Ascending aorta (tissue), 2 donors: ENCODE measurements at regions of chr15 and their contacts with region 1.

Region 1: GRCh38 chr15:85296615-85297402 is 83.6 kb upstream of the AKAP13 start:
- DNase-seq: peak; percentile 13 to 80
- H3K4me3 ChIP-seq: peak overlapping the region; percentile 26 to 39
- H3K27ac ChIP-seq: no peak overlapping the region
- H3K4me1 ChIP-seq: no peaks in the 10 kb centered on the region
- H3K27me3 ChIP-seq: no peaks in the 10 kb centered on the region
- CTCF ChIP-seq: peak; percentile 72 to 77 (median 74)

Region 2: GRCh38 chr15:85367741-85368140 is 70.9 kb after region 1 on chr15:
- intact Hi-C with region 1: no loop called
- DNase-seq: no peak
- H3K4me3 ChIP-seq: no peak overlapping the region
- H3K27ac ChIP-seq: no peak overlapping the region
- H3K4me1 ChIP-seq: no peaks in the 10 kb centered on the region
- H3K27me3 ChIP-seq: no peaks in the 10 kb centered on the region
- CTCF ChIP-seq: no peak

Region 3: DNA sequence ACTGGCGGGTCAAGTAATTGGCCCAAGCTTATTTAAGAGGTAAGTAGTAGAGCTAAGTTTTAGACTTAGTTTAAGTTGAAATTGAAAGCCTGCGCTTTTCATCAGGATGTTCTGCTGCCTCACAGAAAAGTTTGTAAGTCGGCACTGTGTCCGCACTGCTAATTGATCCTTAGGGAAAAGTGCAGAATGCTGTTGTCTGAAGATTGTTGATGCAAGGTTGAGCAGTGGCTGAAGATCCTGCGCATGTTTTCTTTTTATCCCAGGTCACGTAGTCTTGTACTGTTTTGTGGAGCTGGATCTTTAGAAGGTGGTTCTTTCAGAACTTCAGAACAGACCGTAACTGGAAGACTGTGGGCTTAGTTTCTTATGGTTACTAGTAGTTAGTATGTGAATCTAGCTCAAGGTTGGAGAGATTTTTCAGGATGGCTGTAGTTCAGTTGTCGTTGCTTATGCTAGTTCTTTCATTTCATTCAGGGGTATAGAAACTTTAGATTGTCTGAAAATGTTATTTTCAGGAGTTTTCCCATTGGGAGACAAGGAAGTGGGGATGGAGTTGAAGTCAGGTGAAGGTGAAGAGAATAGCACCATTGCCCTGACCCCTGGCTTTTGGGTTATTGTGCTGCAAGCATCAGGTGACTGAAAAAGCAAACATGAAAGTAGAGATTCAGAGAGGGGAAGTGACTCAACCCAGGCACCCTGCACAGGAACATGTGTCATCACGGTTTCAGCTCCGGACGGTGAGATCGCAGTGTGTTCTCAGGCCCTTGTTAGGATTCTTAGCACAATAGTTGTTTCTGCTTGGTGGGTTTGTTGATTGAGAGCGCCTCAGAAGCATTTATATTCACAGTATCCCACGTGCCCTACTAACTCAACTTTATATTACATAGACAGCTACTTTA is 116.4 kb after region 1 on chr15:
- intact Hi-C with region 1: loop called (anchors 5 kb)
- DNase-seq: peak; percentile 59 to 78
- H3K4me3 ChIP-seq: no peak overlapping the region
- H3K27ac ChIP-seq: peak overlapping the region in 1 of 2 donors; percentile 30
- H3K4me1 ChIP-seq: peaks cover 0 to 19% of the 10 kb centered on the region in 2 donors
- H3K27me3 ChIP-seq: no peaks in the 10 kb centered on the region
- CTCF ChIP-seq: peak in 1 of 3 experiments; percentile 8

Region 4: DNA sequence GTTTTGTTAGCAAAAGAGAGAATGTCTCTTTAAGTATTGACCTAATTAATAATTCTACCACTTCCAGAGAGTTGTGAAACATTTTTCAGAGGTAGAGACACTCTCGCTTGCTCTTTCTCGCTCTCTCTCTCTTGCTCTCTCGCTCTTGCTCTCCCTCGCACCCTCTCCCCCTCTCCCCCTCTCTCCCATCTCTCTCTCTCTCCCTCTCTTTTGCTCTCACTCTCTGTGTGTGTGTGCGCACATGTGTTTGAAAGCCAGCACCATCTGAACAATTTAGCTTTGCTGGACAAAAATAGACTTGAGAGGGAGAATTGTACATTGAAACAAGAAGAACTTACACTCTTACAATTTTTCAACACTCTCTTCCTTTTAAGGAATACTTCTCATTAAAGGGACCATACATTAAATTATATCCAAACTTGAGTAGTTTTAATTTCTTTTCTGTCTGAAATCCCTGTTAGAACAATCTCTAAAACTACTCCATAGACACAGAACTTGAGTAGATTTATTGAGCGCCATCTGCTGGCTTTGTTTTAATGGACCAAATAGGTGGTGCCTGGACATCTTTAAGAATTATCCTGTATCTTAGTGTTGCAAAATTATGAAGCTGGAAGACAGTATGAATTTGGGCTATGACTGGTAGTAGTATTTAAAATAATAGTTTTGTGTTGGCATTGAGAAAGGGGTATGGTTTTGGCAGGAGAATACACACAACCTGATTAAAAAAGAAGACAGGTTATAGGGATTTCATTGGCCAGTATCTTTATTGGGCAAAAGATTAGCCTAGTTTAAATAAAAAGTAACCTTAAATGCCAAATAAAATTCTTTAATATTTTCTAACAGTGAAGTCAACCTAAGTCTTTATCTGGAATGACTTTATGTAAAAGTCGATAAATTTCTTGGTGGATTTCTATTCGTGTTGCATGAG is 208.2 kb after region 1 on chr15:
- intact Hi-C with region 1: loop called (anchors 2 kb)
- DNase-seq: peak in 1 of 2 donors; percentile 71
- H3K4me3 ChIP-seq: no peak overlapping the region
- H3K27ac ChIP-seq: no peak overlapping the region
- H3K4me1 ChIP-seq: peaks cover 0 to 6% of the 10 kb centered on the region in 2 donors
- H3K27me3 ChIP-seq: no peaks in the 10 kb centered on the region
- CTCF ChIP-seq: peak; percentile 13 to 67 (median 60)

Region 5: GRCh38 chr15:85831415-85832113 is 534.8 kb after region 1 on chr15:
- intact Hi-C with region 1: loop called (anchors 5 kb)
- DNase-seq: peak in 1 of 2 donors; percentile 76
- H3K4me3 ChIP-seq: no peak overlapping the region
- H3K27ac ChIP-seq: no peak overlapping the region
- H3K4me1 ChIP-seq: no peaks in the 10 kb centered on the region
- H3K27me3 ChIP-seq: no peaks in the 10 kb centered on the region
- CTCF ChIP-seq: peak; percentile 22 to 68 (median 51)